HCT116 (cell line): ENCODE measurements at regions of chr17 and their contacts with region 1.

Region 1: GRCh38 chr17:46061435-46061834 is 62.4 kb downstream of the STH start:
- DNase-seq: peak; percentile 23
- ATAC-seq: peak; percentile 67
- H3K4me3 ChIP-seq: no peak overlapping the region
- H3K27ac ChIP-seq: no peak overlapping the region
- H3K4me1 ChIP-seq: peaks cover 18 to 38% of the 10 kb centered on the region in 2 experiments
- H3K27me3 ChIP-seq: no peaks in the 10 kb centered on the region
- CTCF ChIP-seq: peak; percentile 35 to 56 (median 45); a peak in 5 of 6 replicates
- POLR2A ChIP-seq: no peak
- RAD21 ChIP-seq: peak; percentile 41

Region 2: DNA sequence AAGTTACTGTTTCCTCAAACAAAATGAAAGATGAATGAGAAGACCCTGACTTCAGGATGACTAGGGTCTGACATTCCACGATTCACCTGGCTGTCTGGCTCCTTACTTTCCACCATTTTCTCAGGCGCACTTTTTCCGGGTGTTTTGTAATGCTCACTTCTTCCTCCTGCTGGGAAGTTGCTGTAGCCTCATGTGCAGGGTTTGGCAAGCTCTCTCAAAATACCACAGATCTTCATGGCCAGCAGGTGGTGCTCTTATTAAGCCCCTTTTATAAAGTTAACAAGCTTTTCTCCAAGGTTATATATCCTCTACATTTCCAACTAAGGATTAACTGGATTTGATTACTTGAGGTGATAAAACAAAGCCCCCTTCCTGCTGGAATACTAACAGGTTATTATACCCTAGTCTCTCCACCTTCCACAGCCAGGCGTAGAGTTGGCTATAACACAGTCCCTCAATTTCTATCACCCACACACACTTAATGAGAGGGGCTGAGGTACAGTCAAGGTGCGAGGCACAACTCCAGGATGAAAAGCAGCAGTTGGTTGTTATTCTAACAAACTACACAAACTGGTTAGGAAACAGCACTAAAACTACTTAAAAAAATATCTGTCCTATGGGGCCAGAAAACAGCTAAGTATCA is 17.0 kb before region 1 on chr17:
- CTCF ChIA-PET with region 1: interaction called, 45 read pairs
- POLR2A ChIA-PET with region 1: no interaction called
- RAD21 ChIA-PET with region 1: no interaction called
- intact Hi-C with region 1: loop called (anchors 2 kb)
- DNase-seq: peak; percentile 75
- ATAC-seq: peak; percentile 94
- H3K4me3 ChIP-seq: no peak overlapping the region
- H3K27ac ChIP-seq: no peak overlapping the region
- H3K4me1 ChIP-seq: peaks cover 0 to 9% of the 10 kb centered on the region in 2 experiments; a peak in 2 of 4 replicates
- H3K27me3 ChIP-seq: no peaks in the 10 kb centered on the region
- CTCF ChIP-seq: peak; percentile 94 to 99 (median 98)
- POLR2A ChIP-seq: no peak
- RAD21 ChIP-seq: peak; percentile 84

Region 3: DNA sequence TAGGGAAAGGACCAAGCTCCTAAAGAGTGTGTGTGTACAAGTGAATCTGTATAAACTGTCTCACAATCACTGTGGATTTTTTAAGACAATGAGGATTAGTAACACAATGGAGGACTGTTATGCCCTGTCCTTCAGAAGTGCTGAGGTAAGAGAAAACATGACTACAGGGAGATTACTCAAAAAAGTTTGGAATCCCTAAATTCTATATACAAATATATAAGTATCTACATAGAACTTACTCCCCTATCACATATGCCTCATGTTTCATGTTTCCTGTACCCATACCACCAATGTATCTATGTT is 19.5 kb after region 1 on chr17:
- CTCF ChIA-PET with region 1: no interaction called
- POLR2A ChIA-PET with region 1: no interaction called
- RAD21 ChIA-PET with region 1: no interaction called
- intact Hi-C with region 1: loop called (anchors 2 kb)
- DNase-seq: no peak
- ATAC-seq: no peak
- H3K4me3 ChIP-seq: no peak overlapping the region
- H3K27ac ChIP-seq: no peak overlapping the region
- H3K4me1 ChIP-seq: peaks cover 0 to 3% of the 10 kb centered on the region in 2 experiments; a peak in 1 of 4 replicates
- H3K27me3 ChIP-seq: no peaks in the 10 kb centered on the region
- CTCF ChIP-seq: no peak
- POLR2A ChIP-seq: no peak
- RAD21 ChIP-seq: no peak

Region 4: GRCh38 chr17:46115699-46116098 is 54.3 kb after region 1 on chr17:
- CTCF ChIA-PET with region 1: no interaction called
- POLR2A ChIA-PET with region 1: no interaction called
- RAD21 ChIA-PET with region 1: no interaction called
- intact Hi-C with region 1: no loop called
- DNase-seq: no peak
- ATAC-seq: no peak
- H3K4me3 ChIP-seq: no peak overlapping the region
- H3K27ac ChIP-seq: no peak overlapping the region
- H3K4me1 ChIP-seq: no peaks in the 10 kb centered on the region
- H3K27me3 ChIP-seq: no peaks in the 10 kb centered on the region
- CTCF ChIP-seq: no peak
- POLR2A ChIP-seq: no peak
- RAD21 ChIP-seq: no peak